Activated CD4-positive, alpha-beta T cell treated with anti-CD3 and anti-CD28 coated beads for 36 hours (primary cell): ENCODE measurements at regions of chr14 and their contacts with region 1.

Region 1: DNA sequence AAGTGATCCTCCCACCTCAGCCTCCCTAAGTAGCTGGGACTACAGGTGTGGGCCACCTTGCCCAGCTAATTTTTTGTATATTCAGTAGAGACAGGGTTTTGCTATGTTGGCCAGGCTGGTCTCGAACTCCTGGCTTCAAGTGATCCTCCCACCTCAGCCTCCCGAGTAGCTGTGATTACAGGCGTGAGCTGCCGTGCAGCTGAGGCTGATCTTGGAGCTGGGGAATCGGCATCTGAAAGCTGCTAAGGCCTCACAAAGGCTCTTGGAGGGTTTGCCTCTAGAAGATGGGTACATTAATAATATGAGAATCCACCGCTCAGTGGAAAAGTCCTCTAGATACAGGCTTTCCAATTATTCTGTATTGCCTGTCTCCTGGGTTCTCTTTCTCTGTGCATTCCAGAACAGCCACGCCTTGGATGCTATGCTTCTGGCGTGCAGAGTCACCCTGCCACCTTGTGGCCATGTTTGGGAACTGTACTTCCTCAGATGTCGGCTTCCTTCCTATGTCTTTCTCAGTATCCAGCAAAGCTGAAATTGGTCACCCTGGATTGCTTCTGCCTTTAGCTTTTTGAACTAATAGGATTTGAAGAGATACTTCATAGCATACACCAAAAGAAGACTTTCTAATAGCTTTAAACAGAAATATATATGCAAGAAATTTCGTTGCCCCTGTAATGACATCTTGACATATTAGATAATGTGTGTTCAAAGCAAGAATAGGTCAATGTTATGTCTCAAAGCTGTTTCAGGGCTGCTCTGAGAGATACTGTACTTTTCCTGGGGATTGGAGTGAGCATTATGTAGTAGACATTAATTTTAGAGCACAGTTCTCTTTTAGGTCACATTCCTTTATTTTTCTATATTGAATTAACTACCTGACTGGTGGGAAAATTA is 75.4 kb downstream of the SNAPC1 start:
- DNase-seq: peak; percentile 87
- ATAC-seq: peak; percentile 95
- H3K4me3 Mint-ChIP-seq: no peak overlapping the region
- H3K27ac Mint-ChIP-seq: no peak overlapping the region
- H3K4me1 Mint-ChIP-seq: peaks cover 4% of the 10 kb centered on the region
- H3K27me3 Mint-ChIP-seq: no peaks in the 10 kb centered on the region

Region 2: GRCh38 chr14:61269321-61270083 is 568.1 kb before region 1 on chr14:
- CTCF ChIA-PET with region 1: interaction called, 5 read pairs
- POLR2A ChIA-PET with region 1: no interaction called
- intact Hi-C with region 1: loop called (anchors 1 kb)
- DNase-seq: peak; percentile 85
- ATAC-seq: peak; percentile 95
- H3K4me3 Mint-ChIP-seq: peak overlapping the region; percentile 48
- H3K27ac Mint-ChIP-seq: no peak overlapping the region
- H3K4me1 Mint-ChIP-seq: peaks cover 2% of the 10 kb centered on the region
- H3K27me3 Mint-ChIP-seq: peaks cover 30% of the 10 kb centered on the region

Region 3: DNA sequence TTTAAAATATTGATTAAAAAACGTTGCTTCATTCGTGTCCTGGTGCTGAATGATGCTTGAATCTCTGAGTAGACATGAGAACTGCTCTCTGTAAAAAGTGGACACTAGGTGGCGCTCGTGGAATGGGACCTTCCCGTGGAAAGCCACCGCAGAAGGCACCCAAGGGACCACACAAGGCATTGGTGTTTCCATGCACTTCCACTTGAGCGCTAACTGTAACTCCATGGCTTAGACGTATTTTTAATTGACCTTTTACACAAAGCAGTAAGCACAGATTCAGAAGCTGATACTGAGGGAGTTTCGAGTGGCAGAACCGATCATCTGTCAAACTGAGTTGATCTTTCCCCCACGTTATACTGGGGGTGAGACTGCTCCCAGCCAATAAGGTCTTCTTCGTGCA is 380.9 kb before region 1 on chr14:
- CTCF ChIA-PET with region 1: interaction called, 41 read pairs
- POLR2A ChIA-PET with region 1: interaction called, 3 read pairs
- intact Hi-C with region 1: loop called (anchors 1 kb)
- DNase-seq: peak; percentile 91
- ATAC-seq: peak; percentile 36
- H3K4me3 Mint-ChIP-seq: no peak overlapping the region
- H3K27ac Mint-ChIP-seq: peak overlapping the region; percentile 81
- H3K4me1 Mint-ChIP-seq: peaks cover 85% of the 10 kb centered on the region
- H3K27me3 Mint-ChIP-seq: no peaks in the 10 kb centered on the region

Region 4: DNA sequence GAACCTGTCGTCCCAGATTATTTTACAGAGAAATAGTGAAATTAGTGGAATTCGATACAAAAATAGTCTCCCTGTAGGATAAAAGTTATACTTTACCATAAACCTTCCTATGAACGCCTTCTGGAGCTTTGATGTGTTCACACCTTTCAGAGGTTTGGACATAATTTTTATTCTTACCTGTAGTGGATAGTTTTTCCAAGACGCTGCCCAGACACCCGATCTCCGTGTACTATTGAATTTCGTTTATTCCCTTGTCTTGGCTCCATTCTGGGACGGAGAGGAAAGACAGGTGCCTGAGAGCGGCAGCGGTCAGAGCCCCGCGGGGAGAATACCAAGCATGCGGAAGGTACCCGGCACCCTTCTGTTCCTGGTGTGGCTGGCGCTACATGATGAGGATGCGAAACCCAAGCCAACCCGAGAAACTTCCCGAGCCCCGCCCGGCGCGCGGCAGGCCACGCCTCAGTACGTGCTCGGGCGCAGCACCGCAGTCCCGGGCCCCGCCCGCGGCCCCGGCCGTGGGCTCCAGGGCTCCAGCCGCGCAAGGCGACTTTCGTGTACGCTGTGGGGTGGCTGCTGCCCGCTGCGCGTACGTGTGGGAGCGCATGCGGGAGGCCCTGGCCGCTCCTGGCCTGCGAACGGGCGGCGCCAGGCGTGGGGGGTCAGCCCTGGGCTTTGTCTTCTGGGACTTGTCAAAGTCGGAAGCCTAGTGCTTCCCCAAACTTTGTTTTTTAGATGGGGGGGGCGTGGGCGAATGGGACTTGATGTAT is 86.7 kb before region 1 on chr14:
- CTCF ChIA-PET with region 1: interaction called, 15 read pairs
- POLR2A ChIA-PET with region 1: no interaction called
- intact Hi-C with region 1: no loop called
- DNase-seq: peak; percentile 93
- ATAC-seq: peak; percentile 92
- H3K4me3 Mint-ChIP-seq: peak overlapping the region; percentile 97
- H3K27ac Mint-ChIP-seq: peak overlapping the region; percentile 89
- H3K4me1 Mint-ChIP-seq: peaks cover 22% of the 10 kb centered on the region
- H3K27me3 Mint-ChIP-seq: peaks cover 2% of the 10 kb centered on the region

Region 5: DNA sequence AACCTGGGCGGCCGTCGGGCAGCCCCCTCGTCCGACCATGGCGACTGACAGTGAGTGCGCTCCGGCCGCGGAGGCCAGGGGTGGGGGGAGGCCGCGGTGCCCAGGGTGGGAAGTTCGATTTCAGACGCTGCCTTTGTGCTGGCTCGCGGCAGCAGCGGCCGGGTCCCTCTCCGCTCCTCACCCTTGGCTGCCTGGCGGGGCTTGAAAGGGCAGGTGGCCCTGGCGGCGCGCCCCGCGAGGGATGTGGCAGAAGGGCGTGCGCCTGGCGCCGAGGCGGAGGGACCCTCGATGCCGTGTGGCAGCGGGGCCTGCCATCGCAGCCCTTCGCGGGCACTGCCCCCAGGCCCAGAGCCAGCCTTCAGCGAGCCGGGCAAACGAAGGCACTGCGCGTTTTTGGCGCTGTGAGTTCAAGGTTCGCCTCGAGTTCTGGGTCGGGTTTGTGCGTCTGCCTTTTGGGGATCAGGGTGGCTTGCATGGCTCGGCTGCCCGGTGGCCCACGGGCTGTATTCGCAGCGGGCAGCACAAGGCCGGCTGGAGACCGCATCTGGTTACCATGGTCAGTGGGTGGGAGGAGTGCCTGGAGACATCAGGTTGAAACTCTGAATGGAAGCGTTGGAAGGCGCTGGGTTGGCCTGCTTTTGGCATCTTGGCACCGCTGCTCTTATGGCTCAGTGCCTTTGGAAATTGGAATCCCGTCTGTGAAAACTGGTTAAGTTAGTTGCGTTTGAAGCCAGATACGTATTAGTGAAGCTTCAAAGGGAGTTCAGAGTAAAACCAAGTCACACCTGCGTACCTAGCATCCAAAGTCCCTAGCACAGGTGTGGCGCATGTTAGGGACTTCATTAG is 24.6 kb before region 1 on chr14:
- CTCF ChIA-PET with region 1: interaction called, 14 read pairs
- POLR2A ChIA-PET with region 1: no interaction called
- intact Hi-C with region 1: no loop called
- DNase-seq: peak; percentile 32
- ATAC-seq: peak; percentile 44
- H3K4me3 Mint-ChIP-seq: peak overlapping the region; percentile 60
- H3K27ac Mint-ChIP-seq: no peak overlapping the region
- H3K4me1 Mint-ChIP-seq: peaks cover 6% of the 10 kb centered on the region
- H3K27me3 Mint-ChIP-seq: peaks cover 39% of the 10 kb centered on the region

Region 6: GRCh38 chr14:61973868-61974321 is 136.3 kb after region 1 on chr14:
- CTCF ChIA-PET with region 1: no interaction called
- POLR2A ChIA-PET with region 1: no interaction called
- intact Hi-C with region 1: no loop called
- DNase-seq: no peak
- ATAC-seq: no peak
- H3K4me3 Mint-ChIP-seq: no peak overlapping the region
- H3K27ac Mint-ChIP-seq: no peak overlapping the region
- H3K4me1 Mint-ChIP-seq: no peaks in the 10 kb centered on the region
- H3K27me3 Mint-ChIP-seq: peaks cover 24% of the 10 kb centered on the region

Region 7: GRCh38 chr14:62126879-62127478 is 289.4 kb after region 1 on chr14:
- CTCF ChIA-PET with region 1: interaction called, 19 read pairs
- POLR2A ChIA-PET with region 1: no interaction called
- intact Hi-C with region 1: no loop called
- DNase-seq: no peak
- ATAC-seq: peak; percentile 61
- H3K4me3 Mint-ChIP-seq: no peak overlapping the region
- H3K27ac Mint-ChIP-seq: no peak overlapping the region
- H3K4me1 Mint-ChIP-seq: no peaks in the 10 kb centered on the region
- H3K27me3 Mint-ChIP-seq: peaks cover 30% of the 10 kb centered on the region

Region 8: DNA sequence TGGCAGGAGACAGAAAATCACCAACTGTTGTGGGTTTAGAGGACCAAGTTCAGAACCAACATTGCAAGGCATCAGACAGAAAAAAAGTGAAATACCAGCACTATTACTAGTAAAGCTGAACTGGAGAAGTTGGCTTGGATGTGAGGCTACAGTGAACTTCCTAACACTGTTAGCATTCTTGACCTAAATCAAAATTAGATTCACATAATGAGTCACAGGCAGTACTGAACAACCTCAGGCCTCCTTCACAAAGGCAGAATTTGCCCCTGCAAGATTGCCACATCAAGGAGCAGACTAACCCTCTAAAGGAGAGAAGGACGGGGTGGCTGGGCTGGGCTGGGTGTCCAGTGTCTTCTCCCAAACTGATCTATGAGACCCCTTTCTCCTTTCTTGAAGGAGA is 464.3 kb after region 1 on chr14:
- CTCF ChIA-PET with region 1: no interaction called
- POLR2A ChIA-PET with region 1: no interaction called
- intact Hi-C with region 1: no loop called
- DNase-seq: no peak
- ATAC-seq: no peak
- H3K4me3 Mint-ChIP-seq: no peak overlapping the region
- H3K27ac Mint-ChIP-seq: no peak overlapping the region
- H3K4me1 Mint-ChIP-seq: no peaks in the 10 kb centered on the region
- H3K27me3 Mint-ChIP-seq: peaks cover 5% of the 10 kb centered on the region